ENCODE measurements at regions of chr5 and their contacts with region 1.

Region 1: DNA sequence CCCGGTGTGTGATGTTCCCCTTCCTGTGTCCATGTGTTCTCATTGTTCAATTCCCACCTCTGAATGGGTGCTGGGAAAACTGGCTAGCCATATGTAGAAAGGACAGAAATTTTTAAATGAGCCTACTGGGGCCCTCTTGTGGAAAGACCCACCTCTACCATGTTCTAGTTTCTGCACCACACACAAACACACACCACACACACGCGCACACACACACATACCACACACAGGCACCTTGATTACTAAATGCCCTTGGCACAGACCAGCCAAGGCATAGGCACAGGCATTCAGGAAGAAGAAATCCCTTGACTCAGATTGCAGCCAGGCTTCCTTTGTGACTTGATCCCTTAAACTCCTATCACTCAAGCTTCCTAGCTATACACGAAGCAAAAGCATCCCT is 60.5 kb downstream of the SIL1 start:
- DNase-seq: peak; percentile 30 to 67
- ATAC-seq: peak; percentile 70 to 80 (median 74)
- H3K4me3 ChIP-seq: no peak overlapping the region
- H3K27ac ChIP-seq: peak overlapping the region; percentile 82
- H3K4me1 ChIP-seq: peaks cover 51% of the 10 kb centered on the region
- H3K27me3 ChIP-seq: no peaks in the 10 kb centered on the region
- CTCF ChIP-seq: peak; percentile 18

Region 2: DNA sequence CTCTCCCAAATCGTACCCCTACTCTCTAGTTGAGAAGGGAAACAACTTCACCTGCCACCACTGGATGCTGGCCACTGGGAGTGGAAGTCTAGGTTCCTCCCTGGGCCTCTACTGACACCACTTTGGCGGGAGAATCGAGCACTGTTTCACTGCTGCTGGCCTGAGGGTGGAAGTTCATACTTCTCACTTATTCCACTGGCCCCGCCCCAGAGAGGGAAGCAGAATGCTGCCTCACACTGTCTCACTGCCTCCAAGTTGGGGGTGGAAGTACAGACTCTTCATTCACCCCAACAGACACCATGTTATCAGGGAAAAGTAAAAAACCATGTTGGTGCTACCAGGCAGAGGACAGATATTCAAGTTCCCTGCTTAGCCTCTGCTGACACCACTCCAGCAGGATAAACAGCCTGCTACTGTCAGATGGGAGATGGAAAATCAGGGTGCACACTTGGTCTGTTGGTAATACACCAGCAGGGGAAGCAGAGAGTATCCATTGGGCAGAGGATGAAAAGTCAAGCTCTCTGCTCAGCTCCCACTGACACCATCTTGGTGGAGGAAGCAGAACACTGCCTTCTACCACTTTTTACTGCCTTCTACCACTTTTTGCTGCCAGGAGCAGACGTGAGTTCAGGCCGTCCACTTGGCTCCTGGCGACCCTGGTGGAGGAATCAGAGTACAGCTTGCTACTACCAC is 98.9 kb before region 1 on chr5:
- intact Hi-C with region 1: no loop called
- DNase-seq: no peak
- ATAC-seq: no peak
- H3K4me3 ChIP-seq: no peak overlapping the region
- H3K27ac ChIP-seq: no peak overlapping the region
- H3K4me1 ChIP-seq: peaks cover 4% of the 10 kb centered on the region
- H3K27me3 ChIP-seq: no peaks in the 10 kb centered on the region
- CTCF ChIP-seq: no peak

Region 3: DNA sequence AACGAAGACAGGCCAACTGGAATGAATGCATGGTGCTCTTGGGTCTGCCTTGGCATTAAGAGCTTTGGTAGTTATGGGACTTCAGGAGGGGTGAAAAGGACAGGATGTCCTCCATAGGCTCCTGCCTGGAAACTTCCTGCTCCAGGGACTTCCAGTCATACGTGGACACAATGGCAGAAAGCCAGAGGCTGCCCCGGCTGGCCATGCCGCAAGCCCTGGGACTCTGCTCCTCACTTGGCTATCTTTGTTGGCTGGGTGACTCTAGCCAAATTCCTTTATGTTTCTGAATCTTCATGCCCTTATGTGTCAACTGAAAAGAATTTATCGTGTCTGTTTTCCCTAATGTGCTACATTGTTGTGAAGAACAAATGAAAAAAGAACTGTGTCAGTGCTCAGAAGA is 76.4 kb before region 1 on chr5:
- intact Hi-C with region 1: no loop called
- DNase-seq: peak; percentile 70 to 72
- ATAC-seq: peak; percentile 47 to 88 (median 78)
- H3K4me3 ChIP-seq: no peak overlapping the region
- H3K27ac ChIP-seq: peak overlapping the region; percentile 44
- H3K4me1 ChIP-seq: peaks cover 52% of the 10 kb centered on the region
- H3K27me3 ChIP-seq: no peaks in the 10 kb centered on the region
- CTCF ChIP-seq: no peak

Region 4: GRCh38 chr5:139091439-139092156 is 46.1 kb before region 1 on chr5:
- intact Hi-C with region 1: loop called in 1 of 2 experiments (anchors 5 kb)
- DNase-seq: no peak
- ATAC-seq: peak; percentile 65 to 90 (median 84)
- H3K4me3 ChIP-seq: no peak overlapping the region
- H3K27ac ChIP-seq: no peak overlapping the region
- H3K4me1 ChIP-seq: peaks cover 22% of the 10 kb centered on the region
- H3K27me3 ChIP-seq: no peaks in the 10 kb centered on the region
- CTCF ChIP-seq: peak; percentile 37

Region 5: GRCh38 chr5:139104577-139105276 is 33.0 kb before region 1 on chr5:
- intact Hi-C with region 1: loop called in 1 of 2 experiments (anchors 5 kb)
- DNase-seq: peak; percentile 71 to 83
- ATAC-seq: peak; percentile 90 to 91 (median 90)
- H3K4me3 ChIP-seq: peak overlapping the region; percentile 48
- H3K27ac ChIP-seq: peak overlapping the region; percentile 73
- H3K4me1 ChIP-seq: peaks cover 42% of the 10 kb centered on the region
- H3K27me3 ChIP-seq: no peaks in the 10 kb centered on the region
- CTCF ChIP-seq: no peak

Region 6: DNA sequence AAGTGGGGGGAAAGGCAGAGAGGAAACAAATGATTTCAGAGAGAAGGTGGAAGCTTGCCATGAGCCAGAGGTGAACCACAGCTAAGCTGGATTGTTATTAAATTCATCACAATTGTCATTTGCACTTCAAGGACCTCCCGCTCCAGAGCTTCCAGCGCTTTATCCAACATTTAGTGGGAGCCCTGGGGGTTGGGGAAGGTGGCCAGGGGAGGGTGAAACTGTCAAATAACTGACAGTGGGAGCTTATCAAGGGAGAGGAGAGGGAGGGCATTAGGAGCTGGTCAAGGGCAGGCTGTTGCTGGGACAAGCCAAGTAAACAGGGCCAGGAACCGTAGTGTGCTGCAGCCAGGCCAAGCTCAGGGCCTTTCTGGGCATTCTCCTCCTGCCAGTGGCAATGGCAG is 11.0 kb before region 1 on chr5:
- intact Hi-C with region 1: no loop called
- DNase-seq: no peak
- ATAC-seq: no peak
- H3K4me3 ChIP-seq: no peak overlapping the region
- H3K27ac ChIP-seq: peak overlapping the region; percentile 43
- H3K4me1 ChIP-seq: peaks cover 32% of the 10 kb centered on the region
- H3K27me3 ChIP-seq: no peaks in the 10 kb centered on the region
- CTCF ChIP-seq: no peak

Region 7: DNA sequence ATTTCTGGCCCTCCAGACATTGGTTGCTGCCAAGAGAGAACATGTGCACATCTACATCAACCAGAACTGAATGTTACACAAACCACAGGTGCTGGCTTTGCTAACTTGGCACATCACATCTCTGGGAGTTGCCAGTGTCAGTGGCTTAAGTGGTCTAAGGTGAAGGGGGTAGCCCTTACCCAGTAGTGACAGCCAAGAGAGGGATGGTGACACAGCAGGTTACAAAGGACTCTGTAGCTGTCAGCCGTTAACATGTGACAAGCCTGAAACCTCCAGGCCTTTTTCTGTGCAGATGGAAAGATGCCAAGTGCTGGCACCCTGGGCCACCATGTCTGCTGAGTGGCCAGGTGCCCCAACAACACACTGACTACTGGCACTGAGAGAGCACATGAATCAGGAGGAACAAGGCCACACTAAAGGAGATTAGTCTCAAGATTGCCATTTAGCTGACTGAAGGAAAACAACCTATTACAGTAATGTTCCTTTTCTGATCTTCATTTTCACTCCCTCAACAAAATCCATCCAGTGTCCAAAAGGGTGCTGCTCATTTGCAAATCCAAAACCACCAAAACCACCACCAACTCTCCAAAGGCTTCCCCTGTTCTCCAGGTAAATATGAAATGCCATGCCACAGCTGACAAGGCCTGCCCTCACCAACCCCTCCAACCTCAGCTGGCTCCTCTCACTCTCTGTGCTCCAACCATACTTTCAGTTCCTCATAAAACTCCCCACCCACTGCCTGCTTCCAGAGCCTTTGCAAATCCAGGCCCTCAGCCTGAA is 40.3 kb after region 1 on chr5:
- intact Hi-C with region 1: loop called in 1 of 2 experiments (anchors 5 kb)
- DNase-seq: peak; percentile 75 to 92
- ATAC-seq: peak; percentile 93 to 97 (median 96)
- H3K4me3 ChIP-seq: no peak overlapping the region
- H3K27ac ChIP-seq: peak overlapping the region; percentile 86
- H3K4me1 ChIP-seq: peaks cover 53% of the 10 kb centered on the region
- H3K27me3 ChIP-seq: no peaks in the 10 kb centered on the region
- CTCF ChIP-seq: no peak

Region 8: GRCh38 chr5:139197710-139198669 is 60.3 kb after region 1 on chr5 and contains the start of gene SIL1:
- intact Hi-C with region 1: loop called in 1 of 2 experiments (anchors 10 kb)
- DNase-seq: peak; percentile 98 to 99
- ATAC-seq: peak; percentile 98 to 99 (median 98)
- H3K4me3 ChIP-seq: peak within 1 kb of the TSS; percentile 76
- H3K27ac ChIP-seq: peak within 1 kb of the TSS; percentile 93
- H3K4me1 ChIP-seq: peaks cover 5% of the 10 kb centered on the region
- H3K27me3 ChIP-seq: no peaks in the 10 kb centered on the region
- CTCF ChIP-seq: no peak
- total RNA-seq, gene SIL1: 37.3 to 52.9 (median 39.4) TPM